Aorta (tissue), 5 donors: ENCODE measurements at regions of chr3 and their contacts with region 1.

Region 1: GRCh38 chr3:133475245-133476010 is 75.6 kb downstream of the BFSP2 start:
- DNase-seq: no peak
- ATAC-seq: no peak
- H3K4me3 ChIP-seq: no peak overlapping the region
- H3K27ac ChIP-seq: no peak overlapping the region
- H3K4me1 ChIP-seq: no peaks in the 10 kb centered on the region
- H3K27me3 ChIP-seq: no peaks in the 10 kb centered on the region

Region 2: DNA sequence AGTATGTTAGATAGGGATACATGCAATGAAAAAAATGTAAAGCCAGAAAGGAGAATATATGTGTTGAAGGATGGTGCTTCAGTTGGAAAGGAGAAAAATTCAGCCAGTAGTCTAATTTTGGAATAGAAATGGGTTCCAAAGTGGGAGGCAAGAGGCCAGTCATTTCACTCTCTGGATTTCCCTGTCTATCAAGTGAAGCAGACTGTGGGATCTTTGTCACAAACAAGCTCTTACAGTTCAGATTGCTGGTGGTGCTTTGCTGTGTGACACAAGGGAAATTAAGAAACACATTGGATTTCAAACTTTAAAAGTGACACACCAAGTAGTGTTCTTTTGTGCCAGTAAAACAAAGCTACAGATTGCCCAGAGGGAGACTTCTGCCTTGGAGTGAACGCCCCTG is 157.6 kb before region 1 on chr3:
- intact Hi-C with region 1: no loop called
- DNase-seq: no peak
- ATAC-seq: no peak
- H3K4me3 ChIP-seq: no peak overlapping the region
- H3K27ac ChIP-seq: no peak overlapping the region
- H3K4me1 ChIP-seq: no peaks in the 10 kb centered on the region
- H3K27me3 ChIP-seq: no peaks in the 10 kb centered on the region

Region 3: DNA sequence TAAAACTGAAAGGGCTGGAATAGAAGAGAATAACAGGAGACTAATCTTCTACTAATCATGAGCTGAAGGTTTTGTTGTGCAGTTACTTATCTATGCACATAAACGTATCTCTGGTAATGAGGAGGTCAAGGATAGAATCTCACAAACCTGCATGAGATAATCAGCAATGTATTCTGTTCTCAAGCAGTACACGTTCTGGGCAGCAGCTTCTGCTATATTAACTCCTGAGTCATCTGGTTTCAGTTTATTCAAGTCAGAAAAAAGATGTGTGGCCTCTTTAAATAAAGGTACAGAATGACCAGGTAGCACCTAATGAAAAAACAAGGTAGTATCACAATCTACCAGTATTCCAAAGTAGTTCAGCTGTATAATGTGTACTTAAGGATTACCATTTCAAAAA is 133.0 kb after region 1 on chr3:
- intact Hi-C with region 1: loop called in 1 of 2 experiments (anchors 10 kb)
- DNase-seq: no peak
- ATAC-seq: no peak
- H3K4me3 ChIP-seq: no peak overlapping the region
- H3K27ac ChIP-seq: no peak overlapping the region
- H3K4me1 ChIP-seq: no peaks in the 10 kb centered on the region
- H3K27me3 ChIP-seq: no peaks in the 10 kb centered on the region

Region 4: GRCh38 chr3:134242649-134243617 is 767.5 kb after region 1 on chr3:
- intact Hi-C with region 1: no loop called
- DNase-seq: no peak
- ATAC-seq: no peak
- H3K4me3 ChIP-seq: no peak overlapping the region
- H3K27ac ChIP-seq: peak overlapping the region in 1 of 2 donors; percentile 50
- H3K4me1 ChIP-seq: peaks cover 7 to 19% of the 10 kb centered on the region in 2 donors
- H3K27me3 ChIP-seq: no peaks in the 10 kb centered on the region